ENCODE measurements at regions of chr2 and their contacts with region 1.

Region 1: DNA sequence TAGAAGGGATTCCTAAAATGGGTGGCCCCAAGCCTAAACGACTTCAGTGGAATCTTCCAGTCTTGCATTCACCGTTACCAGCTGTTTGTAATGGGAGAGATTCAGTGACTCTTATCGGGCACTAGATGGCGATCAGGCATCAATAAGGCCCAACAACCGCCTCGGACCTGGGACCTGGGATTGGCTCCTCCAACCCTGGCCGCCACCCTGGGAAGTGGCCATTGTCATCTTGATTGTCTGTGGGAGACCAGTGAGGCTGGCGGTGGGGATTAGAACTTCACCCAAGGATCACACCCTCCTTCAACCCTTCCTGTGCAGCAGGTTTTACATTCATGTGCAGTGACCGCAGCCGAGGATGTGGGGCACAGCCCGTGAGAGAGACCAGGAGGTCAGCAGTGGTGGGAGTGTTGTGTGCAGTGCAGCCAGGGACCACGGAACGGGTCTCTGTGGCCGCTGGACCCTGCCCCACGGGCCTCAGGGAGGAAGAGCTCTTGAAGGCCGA is 85.3 kb downstream of the SPP2 start:
- DNase-seq: peak; percentile 76
- ATAC-seq: peak; percentile 98
- H3K4me3 ChIP-seq: no peak overlapping the region
- H3K27ac ChIP-seq: no peak overlapping the region
- H3K4me1 ChIP-seq: no peaks in the 10 kb centered on the region
- H3K27me3 ChIP-seq: peaks cover 11% of the 10 kb centered on the region
- CTCF ChIP-seq: peak; percentile 89
- POLR2A ChIP-seq: peak; percentile 40; the same call in 1 of the 2 replicates
- RAD21 ChIP-seq: peak; percentile 96

Region 2: GRCh38 chr2:233711312-233712008 is 424.3 kb before region 1 on chr2:
- CTCF ChIA-PET with region 1: no interaction called
- POLR2A ChIA-PET with region 1: no interaction called
- dilution Hi-C with region 1: no loop called
- in situ Hi-C with region 1: no loop called
- intact Hi-C with region 1: no loop called
- DNase-seq: peak; percentile 73
- ATAC-seq: peak; percentile 95
- H3K4me3 ChIP-seq: no peak overlapping the region
- H3K27ac ChIP-seq: no peak overlapping the region
- H3K4me1 ChIP-seq: peaks cover 4% of the 10 kb centered on the region
- H3K27me3 ChIP-seq: no peaks in the 10 kb centered on the region
- CTCF ChIP-seq: peak; percentile 86
- POLR2A ChIP-seq: no peak
- RAD21 ChIP-seq: peak; percentile 86

Region 3: GRCh38 chr2:233976690-233977294 is 159.0 kb before region 1 on chr2:
- CTCF ChIA-PET with region 1: interaction called, 7 read pairs
- POLR2A ChIA-PET with region 1: no interaction called
- dilution Hi-C with region 1: no loop called
- in situ Hi-C with region 1: no loop called
- intact Hi-C with region 1: loop called (anchors 1 kb)
- DNase-seq: peak; percentile 76
- ATAC-seq: peak; percentile 59
- H3K4me3 ChIP-seq: no peak overlapping the region
- H3K27ac ChIP-seq: no peak overlapping the region
- H3K4me1 ChIP-seq: peaks cover 14% of the 10 kb centered on the region
- H3K27me3 ChIP-seq: no peaks in the 10 kb centered on the region
- CTCF ChIP-seq: peak; percentile 77
- POLR2A ChIP-seq: no peak
- RAD21 ChIP-seq: peak; percentile 87

Region 4: GRCh38 chr2:234178330-234179030 is 42.7 kb after region 1 on chr2:
- CTCF ChIA-PET with region 1: no interaction called
- POLR2A ChIA-PET with region 1: no interaction called
- dilution Hi-C with region 1: no loop called
- in situ Hi-C with region 1: no loop called
- intact Hi-C with region 1: no loop called
- DNase-seq: peak; percentile 10
- ATAC-seq: peak; percentile 72
- H3K4me3 ChIP-seq: no peak overlapping the region
- H3K27ac ChIP-seq: no peak overlapping the region
- H3K4me1 ChIP-seq: no peaks in the 10 kb centered on the region
- H3K27me3 ChIP-seq: peaks cover 31% of the 10 kb centered on the region
- CTCF ChIP-seq: no peak
- POLR2A ChIP-seq: no peak
- RAD21 ChIP-seq: no peak

Region 5: DNA sequence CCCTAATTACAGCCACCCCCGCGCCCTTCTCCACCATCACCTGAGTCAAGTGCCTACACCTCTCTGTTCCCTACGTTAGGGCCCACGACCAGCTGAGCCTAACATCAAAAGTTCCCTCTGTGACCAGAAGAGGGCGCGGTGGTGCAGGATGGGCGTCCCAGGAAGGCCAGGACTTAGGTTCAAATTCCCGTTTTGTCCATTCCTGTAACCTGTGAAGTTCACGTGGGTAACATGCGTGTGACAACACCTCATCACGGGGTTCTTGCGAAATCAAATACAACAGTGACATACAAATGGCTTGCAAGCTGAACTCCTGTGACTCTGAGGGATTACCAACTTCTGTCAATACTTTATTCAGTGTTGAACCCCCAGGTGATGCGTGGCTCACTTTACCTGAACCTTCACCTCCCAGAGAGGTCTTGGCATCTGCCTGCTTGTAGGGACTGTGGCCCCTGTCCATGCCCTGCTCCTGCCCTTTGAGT is 153.2 kb after region 1 on chr2:
- CTCF ChIA-PET with region 1: no interaction called
- POLR2A ChIA-PET with region 1: no interaction called
- dilution Hi-C with region 1: no loop called
- in situ Hi-C with region 1: no loop called
- intact Hi-C with region 1: loop called (anchors 5 kb)
- DNase-seq: peak; percentile 41
- ATAC-seq: no peak
- H3K4me3 ChIP-seq: no peak overlapping the region
- H3K27ac ChIP-seq: no peak overlapping the region
- H3K4me1 ChIP-seq: peaks cover 18% of the 10 kb centered on the region
- H3K27me3 ChIP-seq: no peaks in the 10 kb centered on the region
- CTCF ChIP-seq: peak; percentile 65
- POLR2A ChIP-seq: no peak
- RAD21 ChIP-seq: peak; percentile 71

Region 6: GRCh38 chr2:234500394-234501006 is 364.7 kb after region 1 on chr2:
- CTCF ChIA-PET with region 1: interaction called, 9 read pairs
- POLR2A ChIA-PET with region 1: no interaction called
- dilution Hi-C with region 1: no loop called
- in situ Hi-C with region 1: loop called (anchors 5 kb)
- intact Hi-C with region 1: loop called (anchors 1 kb)
- DNase-seq: peak; percentile 65
- ATAC-seq: peak; percentile 27
- H3K4me3 ChIP-seq: no peak overlapping the region
- H3K27ac ChIP-seq: no peak overlapping the region
- H3K4me1 ChIP-seq: peaks cover 4% of the 10 kb centered on the region
- H3K27me3 ChIP-seq: no peaks in the 10 kb centered on the region
- CTCF ChIP-seq: peak; percentile 75
- POLR2A ChIP-seq: no peak
- RAD21 ChIP-seq: peak; percentile 90

Region 7: DNA sequence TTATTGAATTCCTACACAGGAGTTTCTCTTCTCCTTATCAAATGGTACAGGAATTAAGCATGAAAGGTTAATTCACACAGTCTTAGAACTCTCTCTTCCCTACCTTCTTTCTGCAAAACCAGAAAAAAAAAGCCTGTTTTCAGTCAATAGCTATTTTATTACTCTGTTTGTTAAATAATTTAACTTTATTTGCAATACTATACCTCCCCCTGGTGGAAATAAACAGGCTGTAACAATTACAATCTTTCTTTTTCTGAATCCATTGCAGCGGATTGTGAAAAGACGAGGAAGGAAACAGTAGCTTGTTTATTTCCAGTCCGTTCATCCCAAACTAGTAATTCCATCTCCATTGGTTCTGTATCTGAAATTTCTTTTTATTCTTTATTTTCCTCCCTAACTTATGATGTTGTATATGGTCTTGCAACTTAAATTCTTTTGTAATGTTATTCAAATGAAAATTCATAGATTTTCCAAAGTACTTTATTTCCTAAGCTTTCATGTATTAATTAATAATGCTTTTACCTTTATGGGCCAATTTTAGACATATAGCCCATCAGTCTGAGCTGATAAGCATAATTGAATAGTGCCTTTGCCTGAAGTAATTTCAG is 981.2 kb after region 1 on chr2:
- CTCF ChIA-PET with region 1: interaction called, 3 read pairs
- POLR2A ChIA-PET with region 1: no interaction called
- dilution Hi-C with region 1: no loop called
- in situ Hi-C with region 1: loop called (anchors 10 kb)
- intact Hi-C with region 1: loop called (anchors 1 kb)
- DNase-seq: peak; percentile 48
- ATAC-seq: peak; percentile 69
- H3K4me3 ChIP-seq: no peak overlapping the region
- H3K27ac ChIP-seq: no peak overlapping the region
- H3K4me1 ChIP-seq: no peaks in the 10 kb centered on the region
- H3K27me3 ChIP-seq: peaks cover 4% of the 10 kb centered on the region
- CTCF ChIP-seq: peak; percentile 76
- POLR2A ChIP-seq: no peak
- RAD21 ChIP-seq: peak; percentile 74